GM12878 (cell line): ENCODE measurements at regions of chr4 and their contacts with region 1.

Region 1: DNA sequence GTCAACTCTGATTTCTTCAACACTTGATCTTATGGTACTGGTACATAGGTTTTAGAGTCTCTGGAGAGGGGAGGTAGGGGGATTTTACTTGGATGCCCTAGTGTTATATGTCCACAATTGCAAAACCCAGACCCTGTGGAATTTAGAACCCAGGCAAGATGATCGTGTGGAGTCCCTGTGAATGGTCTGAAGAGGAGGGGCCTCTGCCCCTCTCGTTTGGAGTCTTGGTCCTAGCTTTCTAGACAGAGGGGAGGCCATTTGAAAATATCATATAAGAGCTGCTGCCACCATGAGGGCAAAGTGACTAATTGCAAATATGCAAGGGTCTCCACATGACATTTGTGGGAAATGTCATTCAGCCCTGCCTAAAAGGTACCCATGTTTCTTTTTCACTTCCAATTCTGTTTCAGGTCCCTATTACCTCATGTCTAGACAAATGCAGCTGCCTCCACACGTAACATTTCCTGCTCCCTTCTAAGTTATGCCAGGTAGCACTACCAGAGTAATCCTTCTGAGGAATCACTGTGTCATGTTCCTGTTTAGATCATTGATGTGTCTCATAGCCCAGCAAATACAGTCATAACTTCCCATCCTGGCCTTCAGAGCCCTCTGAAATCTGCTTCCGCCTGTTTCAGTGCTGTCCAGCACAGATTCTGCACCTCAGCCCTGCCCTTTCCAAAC is 126.8 kb downstream of the KLHL8 start:
- DNase-seq: peak; percentile 43
- ATAC-seq: peak; percentile 93
- H3K4me3 ChIP-seq: no peak overlapping the region
- H3K27ac ChIP-seq: peak overlapping the region; percentile 13; the same call in 1 of the 2 replicates
- H3K4me1 ChIP-seq: peaks cover 16% of the 10 kb centered on the region
- H3K27me3 ChIP-seq: no peaks in the 10 kb centered on the region
- CTCF ChIP-seq: peak; percentile 62 to 78 (median 64)
- EP300 ChIP-seq: 0 out of 4 replicates have a peak, but pooled peaks of 1 of the 2 experiments have one; percentile 9
- POLR2A ChIP-seq: no peak
- RAD21 ChIP-seq: peak; percentile 85

Region 2: GRCh38 chr4:86927843-86928395 is 165.7 kb before region 1 on chr4:
- CTCF ChIA-PET with region 1: interaction called, 293 read pairs
- POLR2A ChIA-PET with region 1: interaction called, 13 read pairs
- RAD21 ChIA-PET with region 1: interaction called, 183 read pairs
- SMC1A ChIA-PET with region 1: interaction called, 267 read pairs
- in situ Hi-C with region 1: loop called (anchors 5 kb)
- intact Hi-C with region 1: no loop called
- DNase-seq: no peak
- ATAC-seq: peak; percentile 12; the same call in 2 of the 3 replicates
- H3K4me3 ChIP-seq: no peak overlapping the region
- H3K27ac ChIP-seq: no peak overlapping the region; the same call in 1 of the 2 replicates
- H3K4me1 ChIP-seq: peaks cover 15% of the 10 kb centered on the region
- H3K27me3 ChIP-seq: no peaks in the 10 kb centered on the region
- CTCF ChIP-seq: no peak
- EP300 ChIP-seq: no peak
- POLR2A ChIP-seq: no peak
- RAD21 ChIP-seq: no peak

Region 3: GRCh38 chr4:86977621-86978184 is 115.9 kb before region 1 on chr4:
- CTCF ChIA-PET with region 1: interaction called, 5 read pairs
- POLR2A ChIA-PET with region 1: no interaction called
- RAD21 ChIA-PET with region 1: interaction called, 6 read pairs
- SMC1A ChIA-PET with region 1: interaction called, 12 read pairs
- in situ Hi-C with region 1: no loop called
- intact Hi-C with region 1: no loop called
- DNase-seq: peak; percentile 67
- ATAC-seq: peak; percentile 96
- H3K4me3 ChIP-seq: peak overlapping the region; percentile 31; the same call in 1 of the 2 replicates
- H3K27ac ChIP-seq: peak overlapping the region; percentile 55
- H3K4me1 ChIP-seq: peaks cover 41% of the 10 kb centered on the region
- H3K27me3 ChIP-seq: no peaks in the 10 kb centered on the region
- CTCF ChIP-seq: no peak
- EP300 ChIP-seq: peak in 1 of 2 experiments; percentile 74; a peak in 1 of 4 replicates
- POLR2A ChIP-seq: no peak
- RAD21 ChIP-seq: no peak

Region 4: DNA sequence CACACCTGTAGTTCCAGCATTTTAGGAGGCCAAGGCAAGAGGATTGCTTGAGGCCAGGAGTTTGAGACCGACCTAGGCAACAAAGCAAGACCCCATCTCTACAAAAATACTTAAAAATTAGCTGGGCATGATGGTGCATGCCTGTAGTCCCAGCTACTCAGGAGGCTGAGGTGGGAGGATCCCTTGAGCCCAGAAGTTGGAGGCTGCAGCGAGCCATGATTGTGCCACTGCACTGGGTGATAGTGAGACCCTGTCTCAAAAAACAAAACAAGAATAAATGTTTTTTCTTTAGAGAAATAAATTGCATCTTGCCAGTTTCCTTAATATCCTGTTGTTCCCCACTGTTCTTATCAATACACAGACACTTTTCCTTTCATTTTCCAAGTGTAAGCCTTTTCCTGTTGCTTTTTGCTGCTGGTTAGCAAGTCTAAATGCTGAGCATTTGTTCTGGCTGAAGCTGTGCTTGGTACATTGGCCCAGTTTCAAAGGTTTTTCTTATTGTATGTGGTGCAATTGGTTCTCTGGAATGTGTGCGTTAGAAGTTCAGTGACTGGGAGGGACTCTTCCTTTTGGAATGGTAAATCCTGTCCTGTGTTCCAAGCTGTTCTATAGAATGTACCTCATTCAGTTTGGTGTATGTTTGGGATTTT is 60.6 kb before region 1 on chr4:
- CTCF ChIA-PET with region 1: interaction called, 4 read pairs
- POLR2A ChIA-PET with region 1: no interaction called
- RAD21 ChIA-PET with region 1: interaction called, 5 read pairs
- SMC1A ChIA-PET with region 1: interaction called, 12 read pairs
- in situ Hi-C with region 1: no loop called
- intact Hi-C with region 1: no loop called
- DNase-seq: no peak
- ATAC-seq: no peak
- H3K4me3 ChIP-seq: no peak overlapping the region
- H3K27ac ChIP-seq: peak overlapping the region; percentile 11; the same call in 1 of the 2 replicates
- H3K4me1 ChIP-seq: peaks cover 52% of the 10 kb centered on the region
- H3K27me3 ChIP-seq: no peaks in the 10 kb centered on the region
- CTCF ChIP-seq: no peak
- EP300 ChIP-seq: no peak
- POLR2A ChIP-seq: no peak
- RAD21 ChIP-seq: no peak

Region 5: GRCh38 chr4:87058356-87059073 is 35.1 kb before region 1 on chr4:
- CTCF ChIA-PET with region 1: interaction called, 19 read pairs
- POLR2A ChIA-PET with region 1: interaction called, 4 read pairs
- RAD21 ChIA-PET with region 1: interaction called, 13 read pairs
- SMC1A ChIA-PET with region 1: interaction called, 19 read pairs
- in situ Hi-C with region 1: no loop called
- intact Hi-C with region 1: no loop called
- DNase-seq: no peak
- ATAC-seq: peak; percentile 56
- H3K4me3 ChIP-seq: no peak overlapping the region
- H3K27ac ChIP-seq: peak overlapping the region; percentile 4; the same call in 1 of the 2 replicates
- H3K4me1 ChIP-seq: peaks cover 37% of the 10 kb centered on the region
- H3K27me3 ChIP-seq: no peaks in the 10 kb centered on the region
- CTCF ChIP-seq: no peak; a peak in 1 of 6 replicates
- EP300 ChIP-seq: no peak
- POLR2A ChIP-seq: no peak
- RAD21 ChIP-seq: peak; percentile 43; the same call in 1 of the 2 replicates

Region 6: DNA sequence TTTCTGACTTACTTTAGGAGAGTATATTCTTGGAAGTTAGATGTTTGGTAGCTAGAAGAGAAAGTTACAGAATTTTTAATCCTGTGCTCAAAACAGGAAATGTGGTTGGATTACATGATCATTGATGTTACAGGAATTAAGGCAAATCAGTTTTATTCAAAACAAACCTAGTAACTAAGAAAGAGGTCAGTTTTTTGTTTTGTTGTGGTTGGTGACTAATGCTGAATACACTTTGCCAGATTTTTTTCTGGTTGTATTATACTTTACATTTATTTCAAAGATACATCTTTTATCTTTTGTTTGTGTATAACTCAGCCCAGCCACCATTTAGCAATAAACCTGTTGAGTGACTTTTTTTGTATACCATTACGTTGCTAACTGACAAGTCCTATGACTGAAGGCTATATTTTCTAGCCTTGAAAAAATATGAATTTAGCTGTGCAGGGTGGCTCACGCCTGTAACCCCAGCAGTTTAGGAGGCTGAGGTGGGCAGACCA is 10.2 kb after region 1 on chr4:
- CTCF ChIA-PET with region 1: interaction called, 26 read pairs
- POLR2A ChIA-PET with region 1: no interaction called
- RAD21 ChIA-PET with region 1: interaction called, 4 read pairs
- SMC1A ChIA-PET with region 1: interaction called, 11 read pairs
- in situ Hi-C with region 1: no loop called
- intact Hi-C with region 1: no loop called
- DNase-seq: no peak
- ATAC-seq: no peak
- H3K4me3 ChIP-seq: no peak overlapping the region
- H3K27ac ChIP-seq: no peak overlapping the region
- H3K4me1 ChIP-seq: no peaks in the 10 kb centered on the region
- H3K27me3 ChIP-seq: no peaks in the 10 kb centered on the region
- CTCF ChIP-seq: no peak
- EP300 ChIP-seq: no peak
- POLR2A ChIP-seq: no peak
- RAD21 ChIP-seq: no peak